ENCODE measurements at regions of chr4 and their contacts with region 1.

Region 1: GRCh38 chr4:169619959-169620879 is at the start of gene CLCN3:
- DNase-seq: peak; percentile 97 to 99
- H3K4me3 ChIP-seq: peak within 1 kb of the TSS; percentile 76 to 79
- H3K27ac ChIP-seq: peak within 1 kb of the TSS; percentile 95 to 97
- H3K4me1 ChIP-seq: peaks cover 0 to 25% (median 13%) of the 10 kb centered on the region in 4 donors
- H3K27me3 ChIP-seq: no peaks in the 10 kb centered on the region
- CTCF ChIP-seq: peak in 1 of 2 experiments; percentile 22

Region 2: GRCh38 chr4:169757575-169758184 is 137.5 kb after region 1 on chr4 and contains the start of gene HPF1:
- intact Hi-C with region 1: loop called (anchors 10 kb)
- DNase-seq: peak; percentile 92 to 95
- H3K4me3 ChIP-seq: peak within 1 kb of the TSS; percentile 75 to 76
- H3K27ac ChIP-seq: peak within 1 kb of the TSS; percentile 65 to 75
- H3K4me1 ChIP-seq: peaks cover 0 to 23% (median 11%) of the 10 kb centered on the region in 4 donors
- H3K27me3 ChIP-seq: no peaks in the 10 kb centered on the region
- CTCF ChIP-seq: no peak